ENCODE measurements at regions of chr14 and their contacts with region 1.

Region 1: GRCh38 chr14:65958664-65959562 is 527.3 kb upstream of the CCDC196 start:
- DNase-seq: no peak
- ATAC-seq: peak; percentile 77
- H3K4me3 Mint-ChIP-seq: no peak overlapping the region
- H3K27ac Mint-ChIP-seq: peak overlapping the region; percentile 56
- H3K4me1 Mint-ChIP-seq: peaks cover 34% of the 10 kb centered on the region
- H3K27me3 Mint-ChIP-seq: peaks cover 6% of the 10 kb centered on the region

Region 2: GRCh38 chr14:65164068-65164824 is 794.7 kb before region 1 on chr14:
- CTCF ChIA-PET with region 1: interaction called, 30 read pairs
- POLR2A ChIA-PET with region 1: no interaction called
- DNase-seq: peak; percentile 67
- ATAC-seq: peak; percentile 71
- H3K4me3 Mint-ChIP-seq: no peak overlapping the region
- H3K27ac Mint-ChIP-seq: peak overlapping the region; percentile 27
- H3K4me1 Mint-ChIP-seq: peaks cover 29% of the 10 kb centered on the region
- H3K27me3 Mint-ChIP-seq: no peaks in the 10 kb centered on the region

Region 3: GRCh38 chr14:65832431-65833266 is 126.3 kb before region 1 on chr14:
- CTCF ChIA-PET with region 1: interaction called, 48 read pairs
- POLR2A ChIA-PET with region 1: no interaction called
- DNase-seq: no peak
- ATAC-seq: no peak
- H3K4me3 Mint-ChIP-seq: no peak overlapping the region
- H3K27ac Mint-ChIP-seq: peak overlapping the region; percentile 58
- H3K4me1 Mint-ChIP-seq: peaks cover 46% of the 10 kb centered on the region
- H3K27me3 Mint-ChIP-seq: no peaks in the 10 kb centered on the region

Region 4: GRCh38 chr14:65847075-65847847 is 111.7 kb before region 1 on chr14:
- CTCF ChIA-PET with region 1: interaction called, 58 read pairs
- POLR2A ChIA-PET with region 1: interaction called, 6 read pairs
- DNase-seq: peak; percentile 93
- ATAC-seq: peak; percentile 92
- H3K4me3 Mint-ChIP-seq: peak overlapping the region; percentile 60
- H3K27ac Mint-ChIP-seq: peak overlapping the region; percentile 93
- H3K4me1 Mint-ChIP-seq: peaks cover 83% of the 10 kb centered on the region
- H3K27me3 Mint-ChIP-seq: no peaks in the 10 kb centered on the region

Region 5: DNA sequence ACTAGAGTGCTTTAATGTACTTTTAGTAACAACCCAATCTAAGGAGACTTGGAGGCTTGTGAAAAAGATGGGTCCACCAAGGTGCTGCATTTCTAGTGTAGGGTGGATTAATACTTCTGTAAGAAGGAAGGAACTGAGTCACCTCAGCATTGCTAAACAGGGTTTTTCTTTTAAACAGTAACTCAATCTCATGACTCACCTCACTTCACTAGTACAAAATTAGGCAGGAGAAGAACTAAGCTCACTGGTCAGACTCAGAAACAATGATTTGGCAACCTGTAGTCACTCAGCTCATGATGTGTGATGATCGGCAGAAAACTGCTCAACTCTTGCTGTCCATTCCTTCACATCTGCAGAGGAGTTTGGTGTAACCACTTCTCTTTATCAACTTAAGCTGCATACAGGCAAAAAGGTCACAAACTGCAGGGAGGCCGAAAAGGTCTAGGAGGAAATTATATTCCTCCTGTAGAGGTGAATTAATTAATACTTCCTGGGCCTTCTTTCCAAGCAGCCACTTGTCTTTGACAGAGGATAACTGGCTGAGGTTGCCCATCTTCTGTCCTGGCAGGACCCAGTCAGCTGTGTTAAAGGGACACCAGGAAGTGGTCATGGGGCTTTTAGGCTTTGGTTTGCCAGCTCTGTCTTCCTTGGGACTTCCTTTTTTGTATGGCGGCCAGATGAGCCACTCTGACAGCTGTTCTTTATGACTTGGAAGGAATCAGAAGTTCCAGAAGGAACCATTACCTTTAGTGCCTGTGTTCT is 79.5 kb before region 1 on chr14:
- CTCF ChIA-PET with region 1: interaction called, 37 read pairs
- POLR2A ChIA-PET with region 1: no interaction called
- DNase-seq: no peak
- ATAC-seq: peak; percentile 37
- H3K4me3 Mint-ChIP-seq: no peak overlapping the region
- H3K27ac Mint-ChIP-seq: peak overlapping the region; percentile 83
- H3K4me1 Mint-ChIP-seq: peaks cover 9% of the 10 kb centered on the region
- H3K27me3 Mint-ChIP-seq: no peaks in the 10 kb centered on the region

Region 6: GRCh38 chr14:65927931-65928356 is 31.0 kb before region 1 on chr14:
- CTCF ChIA-PET with region 1: interaction called, 51 read pairs
- POLR2A ChIA-PET with region 1: interaction called, 4 read pairs
- DNase-seq: peak; percentile 91
- ATAC-seq: peak; percentile 94
- H3K4me3 Mint-ChIP-seq: peak overlapping the region; percentile 55
- H3K27ac Mint-ChIP-seq: peak overlapping the region; percentile 92
- H3K4me1 Mint-ChIP-seq: peaks cover 79% of the 10 kb centered on the region
- H3K27me3 Mint-ChIP-seq: no peaks in the 10 kb centered on the region

Region 7: DNA sequence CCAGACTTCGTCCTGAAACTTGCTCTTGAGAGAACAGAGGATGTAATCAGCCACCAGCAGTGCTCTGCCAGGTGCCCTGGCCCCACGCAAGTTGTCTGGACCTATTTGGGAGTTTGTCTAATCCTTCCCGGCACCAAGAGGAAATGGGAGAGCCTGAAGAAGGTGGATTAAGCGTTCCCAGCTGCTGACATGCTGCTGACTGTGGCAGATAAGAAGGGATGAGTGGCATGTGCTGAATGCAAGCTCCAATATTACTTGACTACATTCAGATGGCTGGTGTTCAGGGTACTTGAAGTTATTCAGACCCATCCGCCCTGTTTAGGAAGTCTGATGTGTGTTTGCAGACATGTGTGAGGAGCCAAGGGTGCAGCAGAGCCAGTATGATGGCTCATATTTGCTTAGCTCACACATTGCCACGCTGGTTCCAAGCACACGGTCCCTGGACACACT is 86.7 kb after region 1 on chr14:
- CTCF ChIA-PET with region 1: no interaction called
- POLR2A ChIA-PET with region 1: no interaction called
- DNase-seq: no peak
- ATAC-seq: no peak
- H3K4me3 Mint-ChIP-seq: no peak overlapping the region
- H3K27ac Mint-ChIP-seq: no peak overlapping the region
- H3K4me1 Mint-ChIP-seq: no peaks in the 10 kb centered on the region
- H3K27me3 Mint-ChIP-seq: peaks cover 20% of the 10 kb centered on the region

Region 8: GRCh38 chr14:66065188-66065587 is 106.3 kb after region 1 on chr14:
- CTCF ChIA-PET with region 1: interaction called, 47 read pairs
- POLR2A ChIA-PET with region 1: no interaction called
- DNase-seq: no peak
- ATAC-seq: no peak
- H3K4me3 Mint-ChIP-seq: no peak overlapping the region
- H3K27ac Mint-ChIP-seq: no peak overlapping the region
- H3K4me1 Mint-ChIP-seq: peaks cover 6% of the 10 kb centered on the region
- H3K27me3 Mint-ChIP-seq: peaks cover 12% of the 10 kb centered on the region